Dorsolateral prefrontal cortex (tissue), 120 donors: ENCODE measurements at regions of chr7 and their contacts with region 1.

Region 1: GRCh38 chr7:97373736-97374135 is 256.2 kb downstream of the SDHAF3 start:
- DNase-seq: no peak
- H3K4me3 ChIP-seq: no peak overlapping the region
- H3K27ac ChIP-seq: no peak overlapping the region
- H3K27me3 ChIP-seq: no peaks in the 10 kb centered on the region
- CTCF ChIP-seq: no peak

Region 2: DNA sequence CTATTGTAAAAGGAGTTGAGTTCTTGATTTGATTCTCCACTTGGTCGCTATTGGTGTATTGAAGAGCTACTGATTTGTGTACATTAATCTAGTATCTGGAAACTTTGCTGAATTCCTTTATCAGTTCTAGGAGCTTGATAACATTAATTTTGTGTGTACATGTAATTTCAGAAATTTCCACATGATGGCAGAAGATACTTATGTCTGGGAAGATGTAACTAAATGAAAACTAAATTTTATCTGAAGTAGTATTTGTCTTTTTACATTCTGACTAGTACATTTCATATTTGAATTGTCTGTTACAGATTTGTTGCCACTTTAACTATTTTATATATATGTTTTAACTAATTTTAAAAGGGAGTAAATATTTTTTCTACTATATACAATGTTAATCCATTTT is 228.7 kb before region 1 on chr7:
- intact Hi-C with region 1: loop called in 1 of 2 experiments (anchors 10 kb)
- DNase-seq: no peak
- H3K4me3 ChIP-seq: no peak overlapping the region
- H3K27ac ChIP-seq: no peak overlapping the region
- H3K27me3 ChIP-seq: no peaks in the 10 kb centered on the region
- CTCF ChIP-seq: peak; percentile 37 to 82 (median 66)

Region 3: DNA sequence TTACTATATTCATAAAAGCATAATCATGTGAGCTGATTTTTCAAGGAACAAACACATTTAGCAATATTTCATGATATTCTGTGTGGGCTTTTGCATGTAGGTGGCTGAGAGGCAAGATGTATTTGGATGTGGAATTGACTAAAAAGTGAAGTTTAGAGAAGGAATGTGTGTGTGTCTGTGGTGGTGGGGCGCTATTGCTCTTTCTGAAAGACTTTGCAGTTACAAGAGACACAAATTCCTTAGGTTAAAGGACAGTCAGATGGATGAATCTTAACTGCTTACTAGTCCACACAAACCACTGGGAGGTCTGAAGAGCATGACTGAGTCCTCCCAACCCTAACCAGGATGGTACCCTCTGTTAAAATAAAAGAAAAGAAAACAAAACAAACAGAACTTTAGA is 56.2 kb before region 1 on chr7:
- intact Hi-C with region 1: loop called in 1 of 2 experiments (anchors 5 kb)
- DNase-seq: no peak
- H3K4me3 ChIP-seq: no peak overlapping the region
- H3K27ac ChIP-seq: no peak overlapping the region
- H3K27me3 ChIP-seq: no peaks in the 10 kb centered on the region
- CTCF ChIP-seq: peak in 10 of 56 donors; percentile 5 to 45 (median 16)

Region 4: GRCh38 chr7:98211221-98211675 is 837.5 kb after region 1 on chr7 and contains the start of gene BHLHA15:
- intact Hi-C with region 1: no loop called
- DNase-seq: peak in 5 of 10 donors; percentile 16 to 36 (median 26)
- H3K4me3 ChIP-seq: peak within 1 kb of the TSS in 57 of 59 donors; percentile 6 to 62 (median 43)
- H3K27ac ChIP-seq: peak within 1 kb of the TSS in 5 of 59 donors; percentile 7 to 71 (median 40)
- H3K27me3 ChIP-seq: no peaks in the 10 kb centered on the region
- CTCF ChIP-seq: no peak
- total RNA-seq, gene BHLHA15: 0.56 to 3.3 (median 1.4) TPM in 89 of 120 experiments, not detected in the others

Region 5: GRCh38 chr7:98400542-98401340 is 1027.0 kb after region 1 on chr7 and contains the start of gene BAIAP2L1:
- intact Hi-C with region 1: no loop called
- DNase-seq: peak in 3 of 10 donors; percentile 6 to 45 (median 28)
- H3K4me3 ChIP-seq: peak within 1 kb of the TSS in 58 of 59 donors; percentile 29 to 71 (median 54)
- H3K27ac ChIP-seq: no peak within 1 kb of the TSS
- H3K27me3 ChIP-seq: peaks cover 0 to 45% (median 26%) of the 10 kb centered on the region in 45 donors
- CTCF ChIP-seq: peak in 16 of 56 donors; percentile 31 to 63 (median 42)
- total RNA-seq, gene BAIAP2L1: 0.12 to 4.9 (median 0.84) TPM